A673 (cell line): ENCODE measurements at regions of chr17 and their contacts with region 1.

Region 1: DNA sequence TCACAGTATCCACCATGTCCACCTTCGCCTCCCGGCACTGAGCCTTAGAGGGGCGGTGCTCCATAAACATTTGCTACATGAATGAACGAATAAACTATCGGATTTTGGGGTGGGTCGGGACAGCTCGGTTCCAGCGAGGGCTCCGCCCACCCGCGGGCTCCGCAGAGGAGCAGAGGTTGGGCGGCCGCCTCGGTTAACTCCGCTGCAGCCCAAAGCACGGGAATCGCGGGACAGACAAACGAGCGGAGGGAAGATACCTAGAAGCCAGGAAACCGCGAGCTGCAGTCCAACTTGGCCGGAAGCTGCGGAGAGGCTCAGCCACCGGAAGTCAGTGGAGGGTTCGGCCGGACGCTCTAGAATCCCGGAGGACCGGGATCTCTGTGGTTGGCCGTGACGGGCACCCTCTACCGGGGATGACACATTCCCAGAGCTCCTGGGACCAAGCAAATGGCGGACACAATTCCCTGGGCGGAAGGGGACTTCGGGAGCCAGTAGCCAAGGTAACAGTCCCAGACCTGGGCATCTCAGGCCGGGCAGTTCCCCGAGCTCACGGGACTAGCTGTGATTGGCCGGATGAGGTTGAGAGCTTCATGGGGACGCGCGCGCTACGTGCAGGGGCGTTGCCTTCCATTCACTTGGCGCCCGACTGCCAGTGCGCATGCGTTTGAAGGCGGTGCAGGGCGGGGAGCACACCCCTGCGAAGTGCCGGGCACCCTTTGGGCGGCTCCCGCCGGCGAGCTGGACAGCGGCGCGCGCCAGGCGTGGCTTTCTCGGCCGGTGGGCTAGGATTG is 501 bp upstream of the MAPK7 start:
- DNase-seq: peak; percentile 99
- H3K4me3 ChIP-seq: peak overlapping the region; percentile 68
- H3K27ac ChIP-seq: peak overlapping the region; percentile 94
- H3K4me1 ChIP-seq: peaks cover 4% of the 10 kb centered on the region
- H3K27me3 ChIP-seq: no peaks in the 10 kb centered on the region
- CTCF ChIP-seq: no peak

Region 2: GRCh38 chr17:19447085-19447583 is 69.3 kb after region 1 on chr17:
- CTCF ChIA-PET with region 1: interaction called, 7 read pairs
- POLR2A ChIA-PET with region 1: interaction called, 4 read pairs
- intact Hi-C with region 1: loop called (anchors 5 kb)
- DNase-seq: peak; percentile 88
- H3K4me3 ChIP-seq: no peak overlapping the region
- H3K27ac ChIP-seq: peak overlapping the region; percentile 82
- H3K4me1 ChIP-seq: peaks cover 32% of the 10 kb centered on the region
- H3K27me3 ChIP-seq: no peaks in the 10 kb centered on the region
- CTCF ChIP-seq: peak; percentile 90

Region 3: GRCh38 chr17:19673623-19674022 is 295.8 kb after region 1 on chr17:
- CTCF ChIA-PET with region 1: no interaction called
- POLR2A ChIA-PET with region 1: no interaction called
- intact Hi-C with region 1: no loop called
- DNase-seq: no peak
- H3K4me3 ChIP-seq: no peak overlapping the region
- H3K27ac ChIP-seq: no peak overlapping the region
- H3K4me1 ChIP-seq: no peaks in the 10 kb centered on the region
- H3K27me3 ChIP-seq: no peaks in the 10 kb centered on the region
- CTCF ChIP-seq: no peak